Psoas muscle (tissue), 8 donors: ENCODE measurements at regions of chr20 and their contacts with region 1.

Region 1: GRCh38 chr20:31572701-31573554 is 32.2 kb upstream of the ID1 start:
- DNase-seq: peak; percentile 97 to 98
- ATAC-seq: peak; percentile 87 to 90 (median 88)
- H3K4me3 ChIP-seq: peak overlapping the region; percentile 75
- H3K27ac ChIP-seq: peak overlapping the region; percentile 91
- H3K4me1 ChIP-seq: peaks cover 34% of the 10 kb centered on the region
- H3K27me3 ChIP-seq: no peaks in the 10 kb centered on the region
- CTCF ChIP-seq: no peak

Region 2: DNA sequence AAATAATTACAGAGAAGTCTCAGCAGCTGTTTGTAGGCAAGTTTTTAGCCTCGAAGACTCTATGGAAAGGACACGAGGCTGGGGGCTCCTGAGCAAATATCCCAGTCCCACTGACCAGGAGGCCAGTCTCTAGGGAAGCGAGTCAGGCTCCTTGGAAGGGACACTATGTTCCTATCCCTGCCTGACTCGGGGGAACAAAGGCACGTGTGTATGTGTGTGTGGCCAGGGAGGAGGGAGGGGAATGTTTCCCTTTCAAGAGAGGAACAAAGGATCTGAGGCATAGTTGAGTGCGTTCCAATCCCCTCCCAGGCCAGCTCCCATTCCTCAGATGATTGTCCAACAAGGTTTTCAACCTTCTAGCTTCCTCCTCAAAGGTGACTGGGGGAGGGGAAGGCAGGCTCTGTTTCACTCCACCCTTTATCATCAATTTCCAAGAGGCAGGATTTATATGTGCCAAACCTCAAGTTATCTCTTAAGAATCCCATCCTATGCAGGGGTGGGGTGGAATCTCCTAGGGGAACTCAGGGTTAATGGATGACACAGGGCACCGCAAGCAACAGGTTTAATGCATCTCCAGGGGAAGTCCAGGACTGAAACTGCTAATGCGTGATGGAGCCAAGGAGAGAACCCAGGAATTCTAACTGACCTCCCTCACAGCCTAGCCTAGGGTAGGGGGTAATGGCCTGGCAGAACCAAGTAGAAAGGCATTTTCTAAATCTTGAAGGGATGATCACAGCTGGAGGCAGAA is 139.8 kb after region 1 on chr20:
- intact Hi-C with region 1: loop called in 1 of 2 experiments (anchors 10 kb)
- DNase-seq: peak; percentile 87 to 90
- ATAC-seq: peak; percentile 48 to 84 (median 80)
- H3K4me3 ChIP-seq: peak overlapping the region; percentile 53
- H3K27ac ChIP-seq: peak overlapping the region; percentile 85
- H3K4me1 ChIP-seq: peaks cover 94% of the 10 kb centered on the region
- H3K27me3 ChIP-seq: no peaks in the 10 kb centered on the region
- CTCF ChIP-seq: no peak